HCT116 (cell line): ENCODE measurements at regions of chr19 and their contacts with region 1.

Region 1: DNA sequence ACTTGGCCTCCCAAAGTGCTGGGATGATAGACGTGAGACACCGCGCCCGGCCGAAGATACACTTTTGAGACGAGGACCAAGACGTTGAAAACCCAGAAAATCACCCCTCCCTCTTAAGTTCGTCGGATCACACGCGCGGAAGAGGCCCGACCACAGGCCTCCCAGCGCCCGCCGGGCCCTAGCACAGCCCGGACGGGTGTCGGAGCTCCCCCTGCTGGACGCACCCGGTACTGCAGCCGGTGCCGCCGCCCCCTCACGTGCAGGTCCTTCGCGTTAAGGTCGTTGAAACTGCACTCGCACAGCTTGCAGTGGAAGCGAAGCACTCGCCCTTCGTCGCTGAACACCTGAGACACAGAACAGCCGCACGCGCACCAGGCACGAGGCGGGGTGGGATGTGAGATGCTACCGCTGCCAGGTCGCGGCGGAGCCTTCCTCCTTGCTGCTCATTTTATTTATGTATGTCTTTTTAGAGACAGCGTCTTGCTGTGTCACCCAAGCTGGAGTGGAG is 35.7 kb upstream of the MATK start:
- DNase-seq: peak; percentile 40
- ATAC-seq: peak; percentile 94
- H3K4me3 ChIP-seq: no peak overlapping the region
- H3K27ac ChIP-seq: no peak overlapping the region
- H3K4me1 ChIP-seq: peaks cover 0 to 6% of the 10 kb centered on the region in 2 experiments; a peak in 1 of 4 replicates
- H3K27me3 ChIP-seq: no peaks in the 10 kb centered on the region
- CTCF ChIP-seq: peak; percentile 79 to 99 (median 99)
- POLR2A ChIP-seq: no peak
- RAD21 ChIP-seq: peak; percentile 85

Region 2: DNA sequence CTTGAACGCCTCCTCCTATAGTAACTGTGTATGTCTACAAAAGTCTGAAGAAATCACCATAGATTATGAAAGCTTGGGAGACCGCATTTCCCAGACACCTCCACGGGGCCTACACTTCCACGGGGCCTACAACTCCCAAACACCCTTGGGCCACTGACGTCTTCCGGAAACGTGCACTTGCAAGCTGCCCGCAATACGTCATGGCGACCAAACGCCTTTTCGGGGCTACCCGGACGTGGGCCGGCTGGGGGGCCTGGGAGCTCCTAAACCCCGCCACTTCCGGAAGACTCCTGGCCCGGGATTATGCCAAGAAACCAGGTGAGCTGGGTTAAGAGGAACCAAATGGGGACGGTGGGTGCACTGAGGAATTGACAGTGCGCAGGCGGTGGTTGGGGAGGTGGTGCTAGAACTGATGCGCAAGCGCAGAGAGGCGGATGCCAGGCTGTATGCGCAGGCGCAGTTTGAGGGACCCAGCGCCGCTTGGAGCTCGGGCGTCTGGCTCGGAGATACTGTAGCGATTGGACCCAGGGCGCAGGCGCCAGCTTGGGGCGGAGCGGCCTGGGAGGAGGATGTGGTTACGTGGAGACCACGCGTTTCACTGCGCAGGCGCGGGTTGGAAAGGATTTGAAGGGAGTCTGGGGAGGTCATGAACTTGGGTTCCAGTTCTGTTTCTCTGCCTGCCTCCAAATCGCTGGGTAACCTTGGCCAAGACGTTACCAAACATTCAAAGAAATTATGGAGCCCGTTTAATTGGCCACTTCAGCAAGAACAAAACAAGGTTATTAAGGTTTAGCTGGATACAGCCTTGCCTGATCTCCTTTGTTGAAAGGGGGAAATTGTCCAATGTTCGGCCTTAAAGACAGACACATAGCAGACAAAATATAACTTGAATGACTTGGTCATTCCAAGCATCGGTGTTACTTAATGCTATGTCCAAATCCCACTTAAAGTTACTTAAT is 59.1 kb before region 1 on chr19 and contains the start of gene MRPL54:
- CTCF ChIA-PET with region 1: interaction called, 20 read pairs
- POLR2A ChIA-PET with region 1: interaction called, 10 read pairs
- RAD21 ChIA-PET with region 1: no interaction called
- intact Hi-C with region 1: loop called (anchors 5 kb)
- DNase-seq: peak; percentile 98
- ATAC-seq: peak; percentile 88
- H3K4me3 ChIP-seq: peak within 1 kb of the TSS; percentile 77 to 99
- H3K27ac ChIP-seq: peak within 1 kb of the TSS; percentile 93
- H3K4me1 ChIP-seq: peaks cover 6 to 14% of the 10 kb centered on the region in 2 experiments; a peak in 2 of 4 replicates
- H3K27me3 ChIP-seq: no peaks in the 10 kb centered on the region
- CTCF ChIP-seq: no peak
- POLR2A ChIP-seq: peak; percentile 67
- RAD21 ChIP-seq: no peak
- total RNA-seq, gene MRPL54: 67.1 TPM

Region 3: GRCh38 chr19:4042731-4043082 is 220.8 kb after region 1 on chr19:
- CTCF ChIA-PET with region 1: no interaction called
- POLR2A ChIA-PET with region 1: no interaction called
- RAD21 ChIA-PET with region 1: no interaction called
- intact Hi-C with region 1: no loop called
- DNase-seq: no peak
- ATAC-seq: peak; percentile 40
- H3K4me3 ChIP-seq: no peak overlapping the region
- H3K27ac ChIP-seq: no peak overlapping the region; the same call in 1 of the 2 replicates
- H3K4me1 ChIP-seq: no peaks in the 10 kb centered on the region
- H3K27me3 ChIP-seq: no peaks in the 10 kb centered on the region
- CTCF ChIP-seq: no peak
- POLR2A ChIP-seq: no peak
- RAD21 ChIP-seq: no peak